Sciatic nerve (tissue), 2 donors: ENCODE measurements at regions of chr5 and their contacts with region 1.

Region 1: GRCh38 chr5:18465833-18466591 is 831.8 kb downstream of the TAF11L14 start:
- DNase-seq: peak; percentile 72
- ATAC-seq: peak; percentile 87

Region 2: GRCh38 chr5:17400724-17401464 is 1065.1 kb before region 1 on chr5:
- intact Hi-C with region 1: no loop called
- DNase-seq: no peak
- ATAC-seq: no peak

Region 3: DNA sequence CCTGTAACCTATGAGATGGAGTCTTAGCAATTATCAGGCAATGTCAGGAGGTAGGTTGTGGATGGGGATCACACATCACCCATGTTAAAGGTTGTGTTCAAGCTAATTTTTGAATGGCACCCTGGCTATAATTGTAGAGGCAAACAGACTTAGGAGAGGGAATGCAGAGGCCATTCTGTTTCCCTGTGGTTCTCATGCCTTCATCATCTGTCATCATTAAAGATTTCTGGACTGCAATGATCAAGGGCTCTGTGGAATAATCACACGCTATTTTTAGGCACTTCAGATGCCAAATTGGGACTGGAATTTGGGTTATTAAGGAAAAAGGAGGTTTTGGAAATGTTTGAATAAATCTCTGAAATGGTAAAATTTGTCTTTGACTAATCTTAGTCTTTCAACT is 233.7 kb after region 1 on chr5:
- intact Hi-C with region 1: loop called (anchors 10 kb)
- DNase-seq: no peak
- ATAC-seq: no peak